Motor neuron (in vitro differentiated cells): ENCODE measurements at regions of chr4 and their contacts with region 1.

Region 1: GRCh38 chr4:112099701-112100297 is 45.5 kb upstream of the FAM241A start:
- ATAC-seq: peak; percentile 62 to 95 (median 76)
- H3K4me3 ChIP-seq: no peak overlapping the region
- H3K27ac ChIP-seq: no peak overlapping the region
- H3K4me1 ChIP-seq: no peaks in the 10 kb centered on the region

Region 2: GRCh38 chr4:111991797-111992196 is 108.0 kb before region 1 on chr4:
- in situ Hi-C with region 1: no loop called
- ATAC-seq: peak in 4 of 8 experiments; percentile 38 to 90 (median 75)
- H3K4me3 ChIP-seq: no peak overlapping the region
- H3K27ac ChIP-seq: no peak overlapping the region
- H3K4me1 ChIP-seq: peaks cover 0 to 13% of the 10 kb centered on the region in 2 donors

Region 3: DNA sequence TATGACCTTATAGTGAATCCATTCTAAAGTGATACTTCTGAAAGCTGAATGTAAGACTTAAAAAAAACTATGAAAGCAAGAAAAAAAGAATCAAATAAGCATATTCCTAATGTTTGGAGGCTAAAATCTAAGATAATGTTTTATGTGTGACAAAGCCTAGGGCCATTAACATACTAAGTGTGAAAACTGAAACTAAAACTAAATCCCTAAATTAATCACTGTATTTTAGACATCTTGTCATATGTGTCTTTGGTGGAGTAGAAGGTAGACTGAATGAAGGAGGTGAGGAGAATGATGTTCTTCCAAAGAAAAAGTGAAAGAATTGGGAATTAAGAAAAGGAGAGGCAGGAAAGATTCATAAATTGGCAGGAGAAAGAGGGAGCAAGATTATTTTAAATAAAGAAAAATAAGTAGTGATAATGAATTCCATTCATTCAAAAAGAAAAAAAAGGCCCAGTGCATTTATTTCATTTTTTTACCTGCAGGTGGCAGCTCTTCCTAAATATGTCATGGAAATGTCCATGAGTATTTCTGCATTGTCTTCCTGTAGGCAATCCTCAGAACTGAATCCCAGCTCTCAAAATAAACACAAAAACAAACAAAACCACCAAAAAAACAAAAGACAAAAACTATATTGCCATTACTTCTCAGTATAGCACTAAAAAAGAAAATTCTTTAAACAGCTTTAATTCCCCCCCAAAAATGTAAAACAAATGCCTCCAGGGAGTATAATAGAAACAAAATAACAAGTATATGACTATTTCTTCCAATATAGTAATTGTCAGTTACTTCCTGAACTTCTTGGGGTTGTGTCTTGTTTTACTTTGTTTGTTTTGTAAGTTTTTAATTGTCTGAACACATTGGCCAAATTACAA is 114.8 kb after region 1 on chr4:
- in situ Hi-C with region 1: loop called in 1 of 9 experiments (anchors 25 kb)
- ATAC-seq: peak in 2 of 8 experiments; percentile 68 to 75
- H3K4me3 ChIP-seq: no peak overlapping the region
- H3K27ac ChIP-seq: no peak overlapping the region
- H3K4me1 ChIP-seq: no peaks in the 10 kb centered on the region

Region 4: GRCh38 chr4:112231779-112232713 is 132.2 kb after region 1 on chr4 and contains the start of gene AP1AR:
- in situ Hi-C with region 1: loop called in 3 of 9 experiments (anchors 10 to 25 kb)
- ATAC-seq: peak; percentile 62 to 83 (median 80)
- H3K4me3 ChIP-seq: peak within 1 kb of the TSS; percentile 70 to 99 (median 86)
- H3K27ac ChIP-seq: peak within 1 kb of the TSS; percentile 89 to 93
- H3K4me1 ChIP-seq: peaks cover 8 to 17% of the 10 kb centered on the region in 2 donors
- total RNA-seq, gene AP1AR: 21.1 to 31.4 (median 23.8) TPM

Region 5: DNA sequence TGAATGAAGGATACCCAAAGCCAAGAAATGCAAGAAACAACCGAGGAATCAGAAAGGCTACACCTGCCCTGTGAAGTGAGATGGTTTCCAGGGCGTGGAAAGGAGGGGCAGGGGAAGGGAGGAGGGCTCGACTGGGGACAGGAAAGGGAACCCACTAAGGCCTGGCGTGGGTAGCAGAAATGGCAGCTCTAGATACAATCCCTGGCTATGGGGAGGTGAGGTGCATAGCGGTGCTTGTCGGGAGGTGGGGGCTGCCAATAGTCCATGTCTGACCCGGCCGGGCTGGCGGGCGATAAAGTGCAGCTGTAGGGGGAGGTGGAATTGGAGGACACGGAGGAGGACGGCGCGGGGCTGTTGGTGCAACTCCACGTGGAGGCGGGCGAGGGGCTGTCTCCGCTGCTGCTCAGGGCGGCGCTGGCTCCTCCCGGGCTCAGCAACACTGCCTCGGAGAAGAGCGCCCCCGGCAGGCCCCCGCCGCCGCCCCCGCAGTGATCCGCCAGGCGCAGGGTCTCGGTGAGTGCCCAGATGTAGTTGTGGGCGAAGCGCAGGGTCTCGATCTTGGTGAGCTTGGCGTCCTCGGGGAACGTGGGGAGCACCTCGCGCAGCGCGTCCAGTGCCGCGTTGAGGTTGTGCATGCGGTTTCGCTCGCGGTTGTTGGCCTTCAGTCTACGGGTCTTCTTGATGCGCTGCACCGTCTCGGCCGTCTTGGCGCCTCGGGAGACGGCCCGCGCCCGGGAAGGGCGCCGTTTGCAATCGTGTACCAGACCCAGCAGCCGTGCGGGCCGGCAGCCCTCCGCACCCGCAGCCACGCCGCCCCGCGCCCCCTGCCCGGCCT is 414.9 kb after region 1 on chr4:
- in situ Hi-C with region 1: no loop called
- ATAC-seq: peak in 7 of 8 experiments; percentile 11 to 45 (median 37)
- H3K4me3 ChIP-seq: peak overlapping the region; percentile 48 to 75 (median 57)
- H3K27ac ChIP-seq: peak overlapping the region; percentile 69 to 92
- H3K4me1 ChIP-seq: peaks cover 8 to 45% of the 10 kb centered on the region in 2 donors

Region 6: GRCh38 chr4:112604589-112604988 is 504.8 kb after region 1 on chr4:
- in situ Hi-C with region 1: loop called in 1 of 9 experiments (anchors 25 kb)
- ATAC-seq: peak; percentile 74 to 96 (median 88)
- H3K4me3 ChIP-seq: no peak overlapping the region
- H3K27ac ChIP-seq: no peak overlapping the region
- H3K4me1 ChIP-seq: no peaks in the 10 kb centered on the region